ENCODE measurements at regions of chr3 and their contacts with region 1.

Region 1: DNA sequence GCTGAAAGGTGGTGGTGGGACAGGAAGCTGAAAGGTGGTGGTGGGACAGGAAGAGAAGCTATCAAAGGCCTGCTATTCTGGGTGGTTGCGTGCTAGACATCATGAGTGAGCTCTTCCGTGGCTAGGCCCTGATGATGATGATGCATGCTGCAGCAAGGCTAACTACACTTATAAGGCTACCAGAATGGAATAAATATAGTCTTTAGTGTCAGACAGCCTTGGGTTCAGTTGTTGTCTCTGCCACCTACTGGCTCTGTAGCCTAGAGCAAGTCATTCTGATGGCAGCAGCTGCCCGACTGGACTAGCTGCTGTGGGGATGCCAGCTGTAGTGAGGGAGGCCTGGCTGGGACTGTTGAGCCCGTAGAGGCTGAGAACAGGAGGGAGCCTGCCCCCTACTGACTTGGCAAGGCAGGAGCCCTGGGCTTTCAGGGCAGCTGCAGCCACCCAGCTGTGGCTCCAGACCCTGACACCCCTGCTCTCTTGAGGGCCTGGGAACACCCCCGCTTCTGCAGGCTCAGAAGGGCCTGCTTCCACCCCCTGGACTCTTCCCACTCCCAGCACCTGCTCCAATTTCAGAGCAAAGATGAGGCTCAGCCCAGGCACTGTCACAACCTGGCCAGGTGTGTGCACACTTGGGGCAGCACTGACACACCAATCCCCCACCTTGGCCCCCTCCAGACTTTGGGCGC is 21.4 kb upstream of the ZBED2 start:
- DNase-seq: peak in 13 of 14 experiments; percentile 16 to 88 (median 46)
- ATAC-seq: peak; percentile 94
- H3K4me3 ChIP-seq: no peak overlapping the region
- H3K4me3 Mint-ChIP-seq: peak overlapping the region; percentile 26
- H3K27ac ChIP-seq: peak overlapping the region; percentile 27 to 60
- H3K27ac Mint-ChIP-seq: peak overlapping the region; percentile 86
- H3K4me1 ChIP-seq: peaks cover 32% of the 10 kb centered on the region
- H3K4me1 Mint-ChIP-seq: peaks cover 60% of the 10 kb centered on the region
- H3K27me3 ChIP-seq: no peaks in the 10 kb centered on the region
- H3K27me3 Mint-ChIP-seq: no peaks in the 10 kb centered on the region
- CTCF ChIP-seq: peak; percentile 31

Region 2: DNA sequence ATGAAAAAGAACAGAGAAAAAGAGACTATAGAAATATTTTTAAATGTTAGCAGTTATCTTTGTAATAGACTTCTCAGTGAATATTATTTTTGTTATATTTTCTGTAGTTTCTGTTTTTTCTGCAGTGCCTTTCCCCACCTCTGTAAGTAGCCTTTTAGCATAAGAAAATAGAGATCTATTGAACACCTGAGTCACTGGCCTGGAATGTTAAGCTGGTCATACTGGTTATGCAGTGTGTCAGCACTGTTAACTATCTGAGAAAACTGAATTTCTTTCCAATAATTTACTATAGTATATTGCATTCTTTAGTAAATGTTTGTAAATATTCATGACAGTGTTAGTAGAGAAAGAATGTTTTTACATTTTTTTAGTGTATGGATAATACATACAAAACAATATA is 465.1 kb before region 1 on chr3:
- CTCF ChIA-PET with region 1: no interaction called
- POLR2A ChIA-PET with region 1: no interaction called
- intact Hi-C with region 1: no loop called
- DNase-seq: no peak
- ATAC-seq: no peak
- H3K4me3 ChIP-seq: no peak overlapping the region
- H3K4me3 Mint-ChIP-seq: no peak overlapping the region
- H3K27ac ChIP-seq: no peak overlapping the region
- H3K27ac Mint-ChIP-seq: no peak overlapping the region
- H3K4me1 ChIP-seq: no peaks in the 10 kb centered on the region
- H3K4me1 Mint-ChIP-seq: no peaks in the 10 kb centered on the region
- H3K27me3 ChIP-seq: no peaks in the 10 kb centered on the region
- H3K27me3 Mint-ChIP-seq: no peaks in the 10 kb centered on the region
- CTCF ChIP-seq: no peak

Region 3: DNA sequence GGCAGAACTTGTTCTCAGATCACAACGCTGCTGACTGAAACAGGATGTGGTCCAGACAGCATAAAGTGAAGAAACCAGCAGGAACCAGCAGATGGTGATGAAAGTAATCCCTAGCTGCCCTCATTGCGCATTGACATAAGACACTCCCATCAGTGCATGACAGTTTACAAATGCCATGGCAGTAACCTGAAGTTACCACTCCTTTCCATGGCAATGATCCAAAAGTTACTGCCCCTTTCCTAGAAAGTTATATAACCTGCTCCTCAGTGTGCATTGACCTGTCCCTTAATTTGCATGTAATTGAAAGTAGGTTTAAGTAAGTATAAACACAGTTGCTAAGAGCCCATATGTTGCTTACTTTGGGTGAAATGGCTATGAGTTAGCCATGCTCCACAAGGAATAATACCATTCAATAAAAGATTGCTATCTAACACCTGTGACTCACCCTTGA is 223.6 kb before region 1 on chr3:
- CTCF ChIA-PET with region 1: no interaction called
- POLR2A ChIA-PET with region 1: no interaction called
- intact Hi-C with region 1: loop called in 1 of 2 experiments (anchors 2 kb)
- DNase-seq: peak in 13 of 14 experiments; percentile 9 to 85 (median 23)
- ATAC-seq: peak; percentile 96
- H3K4me3 ChIP-seq: no peak overlapping the region
- H3K4me3 Mint-ChIP-seq: no peak overlapping the region
- H3K27ac ChIP-seq: no peak overlapping the region
- H3K27ac Mint-ChIP-seq: peak overlapping the region; percentile 76
- H3K4me1 ChIP-seq: no peaks in the 10 kb centered on the region
- H3K4me1 Mint-ChIP-seq: peaks cover 33% of the 10 kb centered on the region
- H3K27me3 ChIP-seq: no peaks in the 10 kb centered on the region
- H3K27me3 Mint-ChIP-seq: no peaks in the 10 kb centered on the region
- CTCF ChIP-seq: no peak

Region 4: DNA sequence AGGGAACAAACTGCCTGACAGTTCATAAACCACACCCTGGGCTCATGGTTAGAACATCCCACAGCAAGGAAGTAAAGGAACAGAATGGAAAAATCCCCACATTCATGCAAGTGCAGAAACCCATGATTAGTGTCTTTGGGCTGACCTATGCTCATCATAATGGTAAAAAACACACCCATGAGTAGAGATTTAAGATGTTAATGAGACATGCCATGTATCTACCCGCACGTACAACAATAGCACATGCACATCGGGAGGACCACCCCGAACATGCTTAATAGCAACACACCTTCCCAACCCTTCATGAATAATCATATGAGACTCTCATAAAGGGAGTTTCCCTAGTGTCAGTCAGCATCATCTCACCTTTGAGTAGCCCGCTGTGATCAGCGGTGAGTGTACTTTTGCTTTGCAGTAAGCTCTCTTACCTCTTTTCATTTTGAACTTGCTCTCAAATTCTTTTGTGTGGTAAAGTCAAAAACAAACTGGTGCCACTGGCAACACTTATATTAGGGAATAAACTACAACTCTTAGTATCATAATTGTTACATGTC is 44.6 kb before region 1 on chr3:
- CTCF ChIA-PET with region 1: interaction called, 33 read pairs
- POLR2A ChIA-PET with region 1: no interaction called
- intact Hi-C with region 1: no loop called
- DNase-seq: peak in 5 of 14 experiments; percentile 6 to 53 (median 24)
- ATAC-seq: peak; percentile 78
- H3K4me3 ChIP-seq: no peak overlapping the region
- H3K4me3 Mint-ChIP-seq: no peak overlapping the region
- H3K27ac ChIP-seq: no peak overlapping the region
- H3K27ac Mint-ChIP-seq: peak overlapping the region; percentile 78
- H3K4me1 ChIP-seq: peaks cover 16% of the 10 kb centered on the region
- H3K4me1 Mint-ChIP-seq: peaks cover 78% of the 10 kb centered on the region
- H3K27me3 ChIP-seq: no peaks in the 10 kb centered on the region
- H3K27me3 Mint-ChIP-seq: no peaks in the 10 kb centered on the region
- CTCF ChIP-seq: no peak

Region 5: GRCh38 chr3:111594205-111594604 is 22.4 kb before region 1 on chr3:
- CTCF ChIA-PET with region 1: interaction called, 19 read pairs
- POLR2A ChIA-PET with region 1: interaction called, 3 read pairs
- intact Hi-C with region 1: no loop called
- DNase-seq: no peak
- ATAC-seq: no peak
- H3K4me3 ChIP-seq: no peak overlapping the region
- H3K4me3 Mint-ChIP-seq: no peak overlapping the region
- H3K27ac ChIP-seq: peak overlapping the region in 1 of 2 donors; percentile 16
- H3K27ac Mint-ChIP-seq: peak overlapping the region; percentile 78
- H3K4me1 ChIP-seq: peaks cover 20% of the 10 kb centered on the region
- H3K4me1 Mint-ChIP-seq: peaks cover 55% of the 10 kb centered on the region
- H3K27me3 ChIP-seq: no peaks in the 10 kb centered on the region
- H3K27me3 Mint-ChIP-seq: no peaks in the 10 kb centered on the region
- CTCF ChIP-seq: no peak

Region 6: DNA sequence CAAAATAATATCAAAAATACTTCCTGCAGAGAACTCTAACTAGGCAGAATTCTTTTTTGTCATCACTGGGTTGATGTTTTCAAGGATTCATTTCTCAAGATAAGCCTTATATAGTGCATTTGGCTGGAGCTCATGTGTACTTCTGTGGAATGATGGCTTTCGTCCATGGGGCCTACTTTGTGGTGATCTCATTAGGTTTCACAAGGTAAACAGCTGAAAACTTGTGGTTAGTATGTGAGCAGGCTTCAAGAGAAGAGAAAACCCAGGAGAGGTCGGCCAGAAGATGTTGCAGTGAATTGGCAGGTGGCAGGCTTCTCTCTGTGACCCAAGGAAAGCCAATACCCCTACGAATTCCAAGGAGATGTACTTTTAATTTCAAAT is 121.1 kb after region 1 on chr3:
- CTCF ChIA-PET with region 1: no interaction called
- POLR2A ChIA-PET with region 1: no interaction called
- intact Hi-C with region 1: no loop called
- DNase-seq: no peak
- ATAC-seq: no peak
- H3K4me3 ChIP-seq: no peak overlapping the region
- H3K4me3 Mint-ChIP-seq: no peak overlapping the region
- H3K27ac ChIP-seq: no peak overlapping the region
- H3K27ac Mint-ChIP-seq: no peak overlapping the region
- H3K4me1 ChIP-seq: no peaks in the 10 kb centered on the region
- H3K4me1 Mint-ChIP-seq: no peaks in the 10 kb centered on the region
- H3K27me3 ChIP-seq: no peaks in the 10 kb centered on the region
- H3K27me3 Mint-ChIP-seq: no peaks in the 10 kb centered on the region
- CTCF ChIP-seq: no peak

Region 7: DNA sequence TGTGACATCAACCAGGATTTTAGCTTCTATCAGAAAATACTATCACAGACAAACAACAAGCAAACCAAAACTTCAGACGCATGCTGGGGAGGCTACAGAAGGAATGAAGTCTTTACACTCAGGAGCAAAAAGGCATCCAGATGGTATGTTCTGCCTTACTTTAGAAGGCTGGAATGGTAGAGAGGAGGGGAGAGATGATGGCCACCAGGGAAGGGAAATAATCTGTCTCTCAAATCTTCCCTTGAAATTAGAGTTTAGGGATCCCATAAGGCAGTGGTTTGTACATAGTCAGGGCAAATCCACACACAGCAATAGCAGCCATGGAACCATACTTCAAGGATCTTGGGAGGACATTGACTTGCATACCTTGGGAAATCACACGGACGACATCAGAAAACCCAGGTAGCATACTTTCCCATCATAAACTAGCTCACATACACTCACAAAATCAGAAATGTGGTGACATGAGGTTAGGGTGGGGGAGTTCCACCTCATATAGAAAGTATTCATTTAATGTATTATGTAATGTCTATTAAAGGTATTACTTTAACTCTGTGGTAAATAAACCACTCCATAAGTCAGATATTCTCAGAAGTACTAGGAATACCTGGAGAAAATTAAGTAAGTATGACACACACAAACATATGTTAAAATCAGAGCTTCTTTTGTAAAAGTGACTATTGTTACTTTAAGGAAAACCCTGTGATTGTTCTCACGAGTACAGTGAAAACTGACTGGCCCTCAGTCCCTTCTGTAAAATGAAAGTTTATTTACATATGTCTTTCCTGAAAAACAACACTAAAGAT is 873.3 kb after region 1 on chr3:
- CTCF ChIA-PET with region 1: no interaction called
- POLR2A ChIA-PET with region 1: no interaction called
- intact Hi-C with region 1: loop called in 1 of 2 experiments (anchors 5 kb)
- DNase-seq: peak in 2 of 14 experiments; percentile 45 to 47
- ATAC-seq: peak; percentile 50
- H3K4me3 ChIP-seq: no peak overlapping the region
- H3K4me3 Mint-ChIP-seq: peak overlapping the region; percentile 47
- H3K27ac ChIP-seq: no peak overlapping the region
- H3K27ac Mint-ChIP-seq: peak overlapping the region; percentile 90
- H3K4me1 ChIP-seq: peaks cover 31% of the 10 kb centered on the region
- H3K4me1 Mint-ChIP-seq: peaks cover 77% of the 10 kb centered on the region
- H3K27me3 ChIP-seq: no peaks in the 10 kb centered on the region
- H3K27me3 Mint-ChIP-seq: no peaks in the 10 kb centered on the region
- CTCF ChIP-seq: no peak

Measured in CD4-positive, alpha-beta T cell (primary cell).